Endothelial cell of umbilical vein (primary cell): ENCODE measurements at regions of chr18 and their contacts with region 1.

Region 1: DNA sequence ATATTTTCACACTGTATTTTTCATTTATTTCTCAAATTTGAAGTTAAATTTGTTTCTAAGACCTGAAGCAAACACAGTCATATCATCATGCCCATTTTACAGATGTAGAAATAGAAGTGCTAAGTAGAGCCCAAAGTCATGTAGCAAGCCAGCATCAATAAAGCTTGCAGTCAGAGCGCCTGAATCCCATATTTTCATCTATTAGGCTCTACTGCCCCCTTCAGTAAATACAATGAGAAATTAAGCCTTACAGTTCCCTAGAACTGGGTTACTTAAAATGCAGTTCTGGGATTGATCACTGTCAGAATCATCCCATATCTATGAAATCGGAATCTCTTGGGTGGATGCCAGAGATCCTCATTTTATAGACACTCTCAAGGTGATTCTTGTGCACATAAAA is 419.9 kb downstream of the TGIF1 start:
- DNase-seq: peak; percentile 68
- H3K4me3 ChIP-seq: no peak overlapping the region
- H3K27ac ChIP-seq: no peak overlapping the region
- H3K4me1 ChIP-seq: no peaks in the 10 kb centered on the region
- H3K27me3 ChIP-seq: peaks cover 0 to 14% of the 10 kb centered on the region in 2 experiments
- CTCF ChIP-seq: peak; percentile 28 to 39
- POLR2A ChIP-seq: no peak

Region 2: DNA sequence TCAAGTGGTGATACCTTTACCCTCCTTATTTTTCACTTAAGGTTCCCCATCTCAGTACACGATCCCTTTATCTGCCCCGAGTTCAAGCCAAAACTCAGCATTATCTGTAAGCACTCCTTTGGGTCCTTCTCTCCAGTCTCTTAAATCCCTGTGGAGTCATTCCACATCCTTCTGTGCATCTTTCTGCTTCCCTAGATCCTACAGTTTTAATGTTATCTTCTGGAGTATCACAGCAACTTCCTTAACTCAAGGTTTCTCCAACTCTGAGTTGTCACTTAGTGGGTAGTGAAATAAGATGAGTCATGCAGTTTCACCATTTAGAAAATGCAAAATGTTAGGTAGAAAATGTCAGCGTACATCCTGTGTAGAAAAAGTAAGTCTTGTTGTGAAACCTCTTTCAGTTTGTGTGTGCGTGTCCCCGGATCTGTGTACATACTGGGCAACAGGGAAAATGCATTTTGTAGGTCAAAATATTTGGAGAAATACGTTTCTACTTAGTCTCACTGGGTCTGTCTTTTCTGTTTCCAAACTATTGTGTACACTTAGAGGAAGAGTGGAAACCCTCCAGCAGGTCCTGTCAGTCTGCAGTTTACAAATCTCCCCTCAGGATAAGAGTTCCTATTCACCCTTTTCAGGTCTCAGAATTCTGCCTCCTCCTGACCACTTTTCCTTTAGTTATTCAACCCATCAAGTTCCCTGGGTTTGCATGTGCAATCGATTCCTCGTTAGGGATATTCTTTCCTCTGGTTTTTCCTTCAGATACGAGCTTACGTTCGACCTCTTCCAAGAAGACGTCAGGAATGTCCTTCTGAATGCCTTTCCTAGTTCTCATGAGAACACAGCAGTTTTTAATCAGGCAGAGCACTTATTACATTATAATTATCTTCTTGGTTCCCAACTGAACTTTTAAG is 265.1 kb before region 1 on chr18:
- CTCF ChIA-PET with region 1: interaction called, 15 read pairs
- POLR2A ChIA-PET with region 1: no interaction called
- dilution Hi-C with region 1: no loop called
- intact Hi-C with region 1: no loop called
- DNase-seq: peak; percentile 90
- H3K4me3 ChIP-seq: peak overlapping the region; percentile 41 to 95 (median 83)
- H3K27ac ChIP-seq: peak overlapping the region; percentile 96
- H3K4me1 ChIP-seq: peaks cover 43% of the 10 kb centered on the region
- H3K27me3 ChIP-seq: no peaks in the 10 kb centered on the region
- CTCF ChIP-seq: no peak
- POLR2A ChIP-seq: peak; percentile 32

Region 3: GRCh38 chr18:3703732-3704176 is 166.1 kb before region 1 on chr18:
- CTCF ChIA-PET with region 1: interaction called, 186 read pairs
- POLR2A ChIA-PET with region 1: no interaction called
- dilution Hi-C with region 1: no loop called
- intact Hi-C with region 1: loop called (anchors 1 kb)
- DNase-seq: peak; percentile 65
- H3K4me3 ChIP-seq: no peak overlapping the region
- H3K27ac ChIP-seq: no peak overlapping the region
- H3K4me1 ChIP-seq: peaks cover 2% of the 10 kb centered on the region
- H3K27me3 ChIP-seq: no peaks in the 10 kb centered on the region
- CTCF ChIP-seq: peak; percentile 65 to 70
- POLR2A ChIP-seq: no peak

Region 4: DNA sequence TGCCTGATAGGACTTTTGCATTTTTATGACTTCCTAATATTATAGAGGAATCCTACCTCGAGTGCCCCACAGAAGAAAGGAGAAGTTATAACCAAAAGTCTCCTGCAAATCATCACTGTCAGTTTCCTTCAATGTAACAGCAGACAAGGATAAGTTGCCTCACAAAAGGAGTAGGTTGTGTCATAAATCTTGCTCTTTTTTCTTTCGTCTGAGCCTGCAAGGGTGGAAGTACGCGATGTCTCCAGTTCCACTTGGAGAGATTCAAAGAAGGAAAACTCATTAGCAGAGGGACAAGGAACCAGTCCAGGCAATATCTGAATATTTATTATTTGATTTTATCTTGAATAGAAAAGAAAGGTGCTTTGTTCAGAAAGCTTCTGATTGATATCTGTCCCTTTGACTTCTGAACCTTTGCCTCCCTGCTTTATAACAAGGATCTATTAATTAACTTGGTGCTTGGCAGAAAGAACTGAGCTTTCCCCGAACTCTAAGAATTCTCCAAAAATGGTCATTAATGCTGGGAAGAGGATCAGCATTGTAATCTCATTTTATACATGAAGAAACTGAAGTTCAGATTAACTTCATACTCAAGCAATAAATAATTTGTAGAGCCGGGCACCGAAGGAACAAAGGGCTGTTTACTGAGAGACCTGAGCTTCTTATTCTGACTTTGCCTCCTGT is 147.4 kb before region 1 on chr18:
- CTCF ChIA-PET with region 1: interaction called, 15 read pairs
- POLR2A ChIA-PET with region 1: no interaction called
- dilution Hi-C with region 1: no loop called
- intact Hi-C with region 1: no loop called
- DNase-seq: no peak
- H3K4me3 ChIP-seq: no peak overlapping the region
- H3K27ac ChIP-seq: no peak overlapping the region
- H3K4me1 ChIP-seq: peaks cover 6% of the 10 kb centered on the region
- H3K27me3 ChIP-seq: no peaks in the 10 kb centered on the region
- CTCF ChIP-seq: no peak
- POLR2A ChIP-seq: no peak

Region 5: GRCh38 chr18:3857544-3857943 is 12.3 kb before region 1 on chr18:
- CTCF ChIA-PET with region 1: interaction called, 20 read pairs
- POLR2A ChIA-PET with region 1: no interaction called
- dilution Hi-C with region 1: no loop called
- intact Hi-C with region 1: no loop called
- DNase-seq: no peak
- H3K4me3 ChIP-seq: no peak overlapping the region
- H3K27ac ChIP-seq: no peak overlapping the region
- H3K4me1 ChIP-seq: no peaks in the 10 kb centered on the region
- H3K27me3 ChIP-seq: no peaks in the 10 kb centered on the region
- CTCF ChIP-seq: no peak
- POLR2A ChIP-seq: no peak

Region 6: DNA sequence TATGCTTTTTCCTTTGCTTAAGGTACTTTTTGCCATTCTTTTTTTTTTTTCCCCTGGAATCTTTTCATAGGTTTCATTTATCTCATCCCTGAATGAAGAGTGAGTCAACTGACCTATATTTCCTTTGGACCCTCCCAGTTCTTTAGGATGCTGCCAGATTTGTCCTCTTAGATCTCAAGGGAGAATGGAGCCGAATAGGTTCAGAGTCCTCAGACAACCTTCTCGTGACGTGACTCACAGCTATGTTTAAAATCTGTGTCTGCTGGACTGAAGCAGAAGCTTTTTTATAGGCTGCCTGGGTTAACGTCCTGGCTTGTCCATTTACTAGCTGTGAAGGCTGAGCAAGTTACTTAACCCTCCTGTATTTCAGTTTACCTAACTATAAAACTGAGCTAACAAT is 226.6 kb after region 1 on chr18:
- CTCF ChIA-PET with region 1: no interaction called
- POLR2A ChIA-PET with region 1: no interaction called
- dilution Hi-C with region 1: no loop called
- intact Hi-C with region 1: no loop called
- DNase-seq: no peak
- H3K4me3 ChIP-seq: no peak overlapping the region
- H3K27ac ChIP-seq: no peak overlapping the region
- H3K4me1 ChIP-seq: no peaks in the 10 kb centered on the region
- H3K27me3 ChIP-seq: no peaks in the 10 kb centered on the region
- CTCF ChIP-seq: no peak
- POLR2A ChIP-seq: no peak